Activated naive CD8-positive, alpha-beta T cell treated with anti-CD3 and anti-CD28 coated beads, Interleukin-2, amount 10 ng/mL, durations not matched to agents 7 days and 5 days (primary cell): ENCODE measurements at regions of chr17 and their contacts with region 1.

Region 1: DNA sequence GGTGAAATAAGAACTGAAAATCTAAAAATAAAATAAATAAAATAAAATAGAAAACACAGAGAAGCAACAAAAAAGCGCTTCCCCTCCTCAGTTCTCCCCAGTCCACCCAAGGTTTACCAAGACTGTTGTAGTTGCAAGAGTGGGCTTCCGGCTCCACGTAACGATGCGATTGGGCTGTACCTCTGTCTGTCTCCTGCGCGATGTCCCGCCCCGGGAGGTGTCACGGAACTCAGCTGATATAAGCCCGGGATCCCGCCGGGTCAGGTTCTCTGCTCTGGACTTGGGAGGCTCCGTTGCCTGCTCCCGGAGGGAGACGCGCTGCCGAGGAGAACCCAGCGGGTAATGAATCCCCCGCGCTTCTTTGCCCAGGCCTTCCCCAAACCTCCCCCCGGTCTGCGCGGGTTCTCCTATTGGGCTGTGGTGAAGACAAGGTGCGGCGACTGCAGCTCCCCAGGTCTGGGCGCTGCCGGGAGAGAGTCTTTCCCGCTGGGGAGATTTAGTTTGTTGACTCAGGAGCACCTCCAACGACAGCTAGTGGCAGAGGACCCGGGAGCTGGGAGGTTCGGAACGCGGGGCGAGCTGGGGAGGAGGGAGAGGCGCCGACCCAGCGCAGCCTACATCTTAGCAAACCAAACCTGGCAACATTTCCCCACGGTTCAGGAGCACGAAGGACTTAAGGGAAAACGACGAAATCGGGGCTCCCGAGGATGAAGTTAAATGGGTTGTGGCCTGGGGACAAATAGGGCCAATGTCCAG is at the start of gene SLFN5:
- DNase-seq: peak; percentile 96
- ATAC-seq: peak; percentile 73
- H3K4me3 Mint-ChIP-seq: peak within 1 kb of the TSS; percentile 99
- H3K27ac Mint-ChIP-seq: peak within 1 kb of the TSS; percentile 98
- H3K4me1 Mint-ChIP-seq: peaks cover 49% of the 10 kb centered on the region
- H3K27me3 Mint-ChIP-seq: no peaks in the 10 kb centered on the region
- total RNA-seq, gene SLFN5: 239 to 249 TPM

Region 2: DNA sequence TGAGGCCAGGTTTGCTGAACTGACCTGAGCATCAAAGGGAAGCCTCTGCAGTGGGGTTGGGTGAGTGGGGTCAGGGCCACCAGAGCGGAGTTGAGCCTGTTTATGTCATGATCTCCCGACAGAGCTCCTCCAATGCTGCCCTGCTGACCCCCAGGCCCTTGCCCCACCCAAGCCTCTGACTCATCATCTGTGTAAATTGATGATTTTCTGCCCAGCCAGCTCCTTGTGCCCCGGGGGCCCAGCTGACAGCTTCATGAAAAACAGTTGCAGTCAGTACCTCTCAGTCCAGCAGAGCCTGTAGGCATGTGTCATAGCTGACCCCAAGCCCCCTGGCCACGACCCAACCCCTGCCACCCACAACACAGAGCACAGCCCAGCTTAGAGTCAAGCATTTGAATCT is 416.7 kb before region 1 on chr17:
- POLR2A ChIA-PET with region 1: no interaction called
- DNase-seq: no peak
- ATAC-seq: no peak
- H3K4me3 Mint-ChIP-seq: no peak overlapping the region
- H3K27ac Mint-ChIP-seq: no peak overlapping the region
- H3K4me1 Mint-ChIP-seq: no peaks in the 10 kb centered on the region
- H3K27me3 Mint-ChIP-seq: peaks cover 7% of the 10 kb centered on the region

Region 3: DNA sequence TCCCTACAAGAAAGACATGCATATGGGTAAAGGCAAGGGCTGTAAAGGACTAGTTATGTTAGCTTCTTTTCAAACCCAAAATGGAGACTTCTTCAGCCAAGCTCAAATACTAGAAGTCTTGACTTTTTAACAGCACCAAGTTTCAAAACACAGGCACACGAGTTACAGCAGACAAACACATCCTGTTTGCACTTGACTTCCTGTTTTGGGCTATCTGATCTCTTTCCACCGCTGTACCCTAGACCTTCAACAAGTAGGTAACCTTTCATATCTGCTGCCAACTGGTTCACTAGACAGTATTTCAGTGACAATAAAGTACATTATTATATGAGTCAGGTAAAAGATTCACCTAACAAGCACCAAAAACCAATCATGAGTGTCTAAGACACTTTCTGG is 191.8 kb before region 1 on chr17:
- POLR2A ChIA-PET with region 1: no interaction called
- DNase-seq: no peak
- ATAC-seq: peak; percentile 77
- H3K4me3 Mint-ChIP-seq: peak overlapping the region; percentile 52
- H3K27ac Mint-ChIP-seq: peak overlapping the region; percentile 82
- H3K4me1 Mint-ChIP-seq: peaks cover 33% of the 10 kb centered on the region
- H3K27me3 Mint-ChIP-seq: no peaks in the 10 kb centered on the region

Region 4: DNA sequence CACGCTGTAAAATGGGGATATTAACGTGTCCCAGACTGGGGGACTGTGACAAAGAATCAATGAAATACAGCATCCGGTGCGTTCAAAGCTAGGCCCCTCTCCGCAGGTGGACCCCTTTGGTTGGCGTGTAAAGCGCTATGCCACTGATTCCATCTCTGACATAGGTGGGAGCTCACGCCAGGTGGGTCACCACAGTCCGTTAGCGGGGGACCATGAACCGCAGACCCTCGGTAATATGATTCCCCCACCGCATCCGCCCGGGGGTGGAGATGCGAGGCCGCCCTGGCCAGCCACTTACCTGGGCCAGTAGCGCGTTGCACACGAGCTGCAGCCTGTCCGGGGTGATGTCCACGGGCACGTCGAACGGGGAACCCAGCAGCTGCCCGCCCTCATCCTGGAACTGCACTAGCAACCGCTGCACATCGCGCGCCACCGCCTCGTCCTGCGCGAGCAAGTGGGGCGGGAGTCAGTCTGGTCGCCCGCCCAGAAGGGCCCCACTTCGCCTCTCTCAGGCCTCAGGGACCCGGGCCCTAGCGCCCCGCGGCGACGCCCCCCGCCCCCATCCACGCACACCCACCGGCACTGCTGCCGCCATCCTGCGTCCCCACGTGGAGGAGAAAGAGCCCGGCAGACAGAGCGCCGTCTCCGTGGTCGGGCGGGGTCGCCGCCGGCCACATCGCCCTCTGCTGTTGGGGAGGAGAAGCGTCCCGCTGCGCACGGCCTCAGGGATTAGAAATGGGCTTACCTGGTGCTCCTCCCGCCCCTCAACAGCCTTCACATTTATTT is 101.1 kb before region 1 on chr17 and contains the start of gene NLE1:
- POLR2A ChIA-PET with region 1: interaction called, 10 read pairs
- DNase-seq: peak; percentile 94
- ATAC-seq: peak; percentile 93
- H3K4me3 Mint-ChIP-seq: peak within 1 kb of the TSS; percentile 84
- H3K27ac Mint-ChIP-seq: peak within 1 kb of the TSS; percentile 75
- H3K4me1 Mint-ChIP-seq: peaks cover 11% of the 10 kb centered on the region
- H3K27me3 Mint-ChIP-seq: no peaks in the 10 kb centered on the region
- total RNA-seq, gene NLE1: 13.4 to 17.4 TPM

Region 5: GRCh38 chr17:35161281-35161761 is 81.7 kb before region 1 on chr17:
- POLR2A ChIA-PET with region 1: interaction called, 11 read pairs
- DNase-seq: no peak
- ATAC-seq: peak; percentile 84
- H3K4me3 Mint-ChIP-seq: peak overlapping the region; percentile 62
- H3K27ac Mint-ChIP-seq: peak overlapping the region; percentile 85
- H3K4me1 Mint-ChIP-seq: peaks cover 36% of the 10 kb centered on the region
- H3K27me3 Mint-ChIP-seq: no peaks in the 10 kb centered on the region

Region 6: DNA sequence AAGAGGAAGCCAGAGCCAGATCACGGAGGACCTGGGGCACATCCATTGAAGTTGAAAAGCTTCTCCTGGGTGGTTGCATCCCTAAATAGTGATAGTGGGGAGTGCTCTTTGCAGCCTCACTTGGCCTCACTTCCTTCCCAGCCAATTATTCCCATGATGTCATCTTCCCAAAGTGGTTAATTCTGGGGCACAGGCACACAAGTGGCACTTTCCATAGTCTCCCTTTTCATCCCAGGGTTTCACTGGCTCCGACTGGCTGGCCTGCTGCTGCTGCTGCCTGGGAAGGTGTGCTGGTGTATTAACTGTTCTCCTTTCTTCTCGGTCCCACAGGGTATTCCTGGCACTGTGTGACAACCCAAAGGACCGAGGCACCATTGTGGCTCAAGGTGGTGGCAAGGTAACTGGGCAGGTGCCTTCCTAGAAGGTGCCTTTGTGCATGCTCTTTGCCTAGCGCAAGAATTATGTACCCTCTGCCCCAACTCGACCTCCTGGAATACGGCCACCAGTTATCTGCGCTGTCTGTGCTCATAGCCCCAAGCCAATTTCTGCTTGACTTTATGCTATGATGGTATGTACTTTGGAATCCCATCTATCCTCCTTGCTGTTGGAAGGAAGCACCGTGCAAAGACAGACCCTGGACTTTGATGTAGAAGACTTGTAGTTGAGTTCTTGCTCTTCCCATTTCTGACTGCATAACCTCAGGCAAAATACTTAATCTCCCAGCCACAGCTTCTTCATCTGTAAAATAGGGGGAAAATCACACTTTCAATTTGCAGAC is 67.2 kb before region 1 on chr17:
- POLR2A ChIA-PET with region 1: interaction called, 24 read pairs
- DNase-seq: no peak
- ATAC-seq: no peak
- H3K4me3 Mint-ChIP-seq: no peak overlapping the region
- H3K27ac Mint-ChIP-seq: peak overlapping the region; percentile 14
- H3K4me1 Mint-ChIP-seq: peaks cover 56% of the 10 kb centered on the region
- H3K27me3 Mint-ChIP-seq: no peaks in the 10 kb centered on the region

Region 7: DNA sequence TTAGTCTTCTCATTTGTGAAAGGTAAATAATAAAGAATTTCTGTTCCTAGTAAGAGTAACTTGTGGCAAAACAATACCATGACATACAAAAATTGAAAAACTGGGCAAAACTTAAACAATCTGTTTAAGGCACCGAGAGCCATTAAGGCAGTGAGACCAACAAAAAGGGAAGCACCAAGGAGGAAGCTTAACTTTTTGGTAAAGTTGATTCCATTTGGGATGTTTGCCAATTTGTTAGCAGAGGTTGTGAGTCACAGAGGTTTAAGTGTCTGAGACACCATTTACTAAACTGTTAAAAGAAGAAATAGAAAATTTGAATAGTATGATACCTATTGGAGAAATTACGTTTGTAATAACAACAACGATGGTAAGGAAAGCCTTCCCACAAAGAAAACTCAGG is 53.7 kb before region 1 on chr17:
- POLR2A ChIA-PET with region 1: interaction called, 17 read pairs
- DNase-seq: no peak
- ATAC-seq: no peak
- H3K4me3 Mint-ChIP-seq: peak overlapping the region; percentile 77
- H3K27ac Mint-ChIP-seq: peak overlapping the region; percentile 78
- H3K4me1 Mint-ChIP-seq: peaks cover 50% of the 10 kb centered on the region
- H3K27me3 Mint-ChIP-seq: no peaks in the 10 kb centered on the region

Region 8: GRCh38 chr17:35214631-35215273 is 28.2 kb before region 1 on chr17:
- POLR2A ChIA-PET with region 1: interaction called, 296 read pairs
- DNase-seq: peak; percentile 61
- ATAC-seq: peak; percentile 55
- H3K4me3 Mint-ChIP-seq: peak overlapping the region; percentile 71
- H3K27ac Mint-ChIP-seq: peak overlapping the region; percentile 92
- H3K4me1 Mint-ChIP-seq: peaks cover 80% of the 10 kb centered on the region
- H3K27me3 Mint-ChIP-seq: no peaks in the 10 kb centered on the region

Region 9: DNA sequence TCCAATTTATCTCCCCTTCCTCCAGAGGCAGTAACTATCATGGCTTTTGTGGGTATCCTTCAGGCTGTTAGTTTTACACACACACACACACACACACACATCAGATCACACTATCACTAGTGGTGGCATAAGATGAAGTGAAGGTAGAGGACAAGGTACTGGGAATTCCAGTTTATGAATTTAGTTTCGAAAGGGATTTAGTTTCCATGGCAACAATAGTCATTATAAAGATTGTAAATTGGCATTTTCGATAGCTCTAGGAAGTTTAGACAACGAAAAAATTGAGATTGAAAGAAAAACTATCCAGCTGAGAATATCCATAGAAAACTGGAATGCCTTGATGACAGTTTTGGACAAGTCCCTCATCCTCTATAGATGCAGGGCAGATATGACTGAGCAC is 30.7 kb after region 1 on chr17:
- POLR2A ChIA-PET with region 1: no interaction called
- DNase-seq: no peak
- ATAC-seq: no peak
- H3K4me3 Mint-ChIP-seq: no peak overlapping the region
- H3K27ac Mint-ChIP-seq: no peak overlapping the region
- H3K4me1 Mint-ChIP-seq: peaks cover 25% of the 10 kb centered on the region
- H3K27me3 Mint-ChIP-seq: peaks cover 4% of the 10 kb centered on the region

Region 10: DNA sequence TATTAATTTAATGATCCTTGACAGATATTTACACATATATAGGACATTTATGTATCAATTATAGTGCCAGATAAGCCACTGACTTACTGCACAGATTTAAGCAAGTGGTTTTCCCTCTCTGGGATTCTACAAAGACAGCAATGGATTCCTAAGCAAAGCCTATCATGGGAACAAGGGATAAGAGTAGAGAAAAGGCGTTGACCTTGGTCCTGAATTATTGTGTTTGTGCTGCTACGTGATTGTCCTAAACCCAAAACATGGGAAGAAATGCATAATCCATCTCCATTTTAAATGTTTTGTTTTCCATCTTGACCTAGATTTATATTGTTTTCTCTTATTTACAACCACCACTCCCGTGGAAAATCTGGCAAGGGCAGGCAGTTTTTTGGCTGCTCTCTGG is 116.4 kb after region 1 on chr17:
- POLR2A ChIA-PET with region 1: no interaction called
- DNase-seq: no peak
- ATAC-seq: no peak
- H3K4me3 Mint-ChIP-seq: no peak overlapping the region
- H3K27ac Mint-ChIP-seq: no peak overlapping the region
- H3K4me1 Mint-ChIP-seq: peaks cover 7% of the 10 kb centered on the region
- H3K27me3 Mint-ChIP-seq: no peaks in the 10 kb centered on the region